PC-3 (cell line): ENCODE measurements at regions of chr14 and their contacts with region 1.

Region 1: GRCh38 chr14:61034416-61035120 is 53.5 kb downstream of the SLC38A6 start:
- DNase-seq: peak; percentile 45
- ATAC-seq: no peak
- H3K4me3 ChIP-seq: no peak overlapping the region
- H3K27ac ChIP-seq: no peak overlapping the region
- H3K4me1 ChIP-seq: peaks cover 11% of the 10 kb centered on the region; the same call in 1 of the 2 replicates
- H3K27me3 ChIP-seq: no peaks in the 10 kb centered on the region
- CTCF ChIP-seq: no peak

Region 2: DNA sequence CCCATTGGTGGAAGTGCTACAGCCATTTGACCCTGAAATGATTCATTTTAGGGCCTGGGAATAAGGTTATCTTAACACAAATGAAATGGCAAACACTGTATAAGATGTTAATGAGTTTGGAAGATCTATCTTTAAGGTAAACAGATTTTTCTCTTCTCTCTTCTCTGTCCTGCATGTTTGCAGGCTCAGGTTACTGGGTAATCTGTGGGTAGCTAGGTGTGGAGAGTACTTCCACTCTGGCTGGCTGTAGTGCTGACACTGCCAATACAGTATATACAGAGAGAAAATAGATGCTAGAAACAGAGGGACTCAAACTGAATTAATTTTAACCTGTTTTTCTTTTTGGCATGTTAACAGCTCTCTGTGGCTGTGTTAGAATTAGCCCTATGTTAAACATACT is 31.1 kb after region 1 on chr14:
- CTCF ChIA-PET with region 1: no interaction called
- POLR2A ChIA-PET with region 1: no interaction called
- intact Hi-C with region 1: loop called (anchors 5 kb)
- DNase-seq: no peak
- ATAC-seq: peak; percentile 92
- H3K4me3 ChIP-seq: no peak overlapping the region
- H3K27ac ChIP-seq: no peak overlapping the region
- H3K4me1 ChIP-seq: no peaks in the 10 kb centered on the region
- H3K27me3 ChIP-seq: no peaks in the 10 kb centered on the region
- CTCF ChIP-seq: no peak